ENCODE measurements at regions of chr19 and their contacts with region 1.

Region 1: GRCh38 chr19:33186431-33187182 is 7.5 kb upstream of the LRP3 start:
- DNase-seq: no peak
- H3K4me3 Mint-ChIP-seq: no peak overlapping the region
- H3K27ac Mint-ChIP-seq: no peak overlapping the region
- H3K4me1 Mint-ChIP-seq: peaks cover 3% of the 10 kb centered on the region
- H3K27me3 Mint-ChIP-seq: no peaks in the 10 kb centered on the region

Region 2: DNA sequence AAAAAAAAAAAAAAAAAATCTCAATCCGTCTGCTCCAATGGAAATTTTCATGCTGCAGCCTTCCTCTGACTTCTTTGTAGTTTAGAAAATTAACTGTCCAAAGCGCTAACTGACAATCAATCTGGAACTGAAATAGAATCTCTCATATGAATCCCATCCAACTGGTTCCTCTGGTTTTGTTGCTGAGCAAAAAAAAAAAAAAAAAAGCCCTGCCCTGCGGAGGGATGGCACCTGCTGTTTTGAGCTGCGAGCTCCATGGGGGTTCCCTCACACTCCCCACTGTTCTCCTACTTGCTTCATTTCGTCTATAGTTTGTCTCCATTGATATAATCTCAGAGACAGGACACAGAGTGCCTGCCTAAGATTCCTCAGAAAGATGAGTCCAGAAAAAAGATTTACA is 181.2 kb before region 1 on chr19:
- CTCF ChIA-PET with region 1: no interaction called
- intact Hi-C with region 1: no loop called
- DNase-seq: no peak
- H3K4me3 Mint-ChIP-seq: no peak overlapping the region
- H3K27ac Mint-ChIP-seq: no peak overlapping the region
- H3K4me1 Mint-ChIP-seq: peaks cover 5% of the 10 kb centered on the region
- H3K27me3 Mint-ChIP-seq: no peaks in the 10 kb centered on the region

Region 3: DNA sequence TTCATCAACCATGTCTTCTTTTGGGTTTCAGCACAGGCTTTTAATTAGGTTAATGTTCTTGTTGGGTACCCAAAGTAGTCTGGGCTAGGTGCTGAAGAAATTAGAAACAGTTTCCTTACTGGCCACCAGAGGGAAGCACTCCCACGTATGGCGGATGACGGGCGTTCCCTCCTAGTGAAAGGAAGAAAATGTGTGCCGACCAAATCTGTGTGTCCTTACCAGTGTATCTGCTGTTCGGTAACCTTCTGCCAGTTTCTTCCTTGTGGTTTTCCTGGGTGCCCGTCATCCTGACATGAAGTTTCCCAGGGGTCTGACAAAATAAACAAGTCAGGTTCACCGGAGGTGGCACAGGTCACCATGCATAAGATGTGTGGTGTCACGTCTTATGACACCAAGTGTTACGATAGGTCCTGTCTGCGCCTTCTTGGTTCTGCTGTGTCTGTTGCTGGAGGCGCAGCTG is 60.6 kb before region 1 on chr19:
- CTCF ChIA-PET with region 1: interaction called, 30 read pairs
- intact Hi-C with region 1: no loop called
- DNase-seq: peak; percentile 69
- H3K4me3 Mint-ChIP-seq: no peak overlapping the region
- H3K27ac Mint-ChIP-seq: no peak overlapping the region
- H3K4me1 Mint-ChIP-seq: peaks cover 3% of the 10 kb centered on the region
- H3K27me3 Mint-ChIP-seq: no peaks in the 10 kb centered on the region

Region 4: GRCh38 chr19:33132425-33132824 is 54.2 kb before region 1 on chr19:
- CTCF ChIA-PET with region 1: interaction called, 16 read pairs
- intact Hi-C with region 1: no loop called
- DNase-seq: no peak
- H3K4me3 Mint-ChIP-seq: no peak overlapping the region
- H3K27ac Mint-ChIP-seq: no peak overlapping the region
- H3K4me1 Mint-ChIP-seq: peaks cover 7% of the 10 kb centered on the region
- H3K27me3 Mint-ChIP-seq: no peaks in the 10 kb centered on the region

Region 5: GRCh38 chr19:33143897-33144405 is 42.7 kb before region 1 on chr19:
- CTCF ChIA-PET with region 1: interaction called, 44 read pairs
- intact Hi-C with region 1: loop called (anchors 1 kb)
- DNase-seq: peak; percentile 69
- H3K4me3 Mint-ChIP-seq: no peak overlapping the region
- H3K27ac Mint-ChIP-seq: no peak overlapping the region
- H3K4me1 Mint-ChIP-seq: peaks cover 4% of the 10 kb centered on the region
- H3K27me3 Mint-ChIP-seq: no peaks in the 10 kb centered on the region

Region 6: DNA sequence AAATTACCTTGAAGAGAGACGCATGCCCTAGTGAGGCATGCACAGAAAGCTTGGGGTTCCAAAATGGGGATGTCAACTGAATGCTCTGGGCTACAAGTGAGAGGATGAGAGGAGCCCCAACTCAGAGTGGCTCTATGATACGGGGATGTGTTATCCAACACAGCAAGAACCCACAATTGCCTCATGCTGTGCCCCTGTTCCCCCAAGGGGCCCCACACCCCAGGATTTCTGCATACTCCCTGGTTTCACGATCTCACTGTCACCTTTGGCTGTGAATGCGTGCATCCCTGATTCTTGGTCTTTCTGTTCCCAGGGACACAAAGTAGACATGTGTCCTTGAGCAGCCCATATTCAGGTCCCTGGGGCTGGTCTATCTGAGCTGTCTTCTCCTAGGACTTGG is 25.4 kb before region 1 on chr19:
- CTCF ChIA-PET with region 1: interaction called, 14 read pairs
- intact Hi-C with region 1: no loop called
- DNase-seq: no peak
- H3K4me3 Mint-ChIP-seq: no peak overlapping the region
- H3K27ac Mint-ChIP-seq: peak overlapping the region; percentile 50
- H3K4me1 Mint-ChIP-seq: peaks cover 27% of the 10 kb centered on the region
- H3K27me3 Mint-ChIP-seq: no peaks in the 10 kb centered on the region

Measured in activated naive CD4-positive, alpha-beta T cell treated with anti-CD3 and anti-CD28 coated beads for 36 hours (primary cell).